HAP-1 (cell line): ENCODE measurements at regions of chr4 and their contacts with region 1.

Region 1: DNA sequence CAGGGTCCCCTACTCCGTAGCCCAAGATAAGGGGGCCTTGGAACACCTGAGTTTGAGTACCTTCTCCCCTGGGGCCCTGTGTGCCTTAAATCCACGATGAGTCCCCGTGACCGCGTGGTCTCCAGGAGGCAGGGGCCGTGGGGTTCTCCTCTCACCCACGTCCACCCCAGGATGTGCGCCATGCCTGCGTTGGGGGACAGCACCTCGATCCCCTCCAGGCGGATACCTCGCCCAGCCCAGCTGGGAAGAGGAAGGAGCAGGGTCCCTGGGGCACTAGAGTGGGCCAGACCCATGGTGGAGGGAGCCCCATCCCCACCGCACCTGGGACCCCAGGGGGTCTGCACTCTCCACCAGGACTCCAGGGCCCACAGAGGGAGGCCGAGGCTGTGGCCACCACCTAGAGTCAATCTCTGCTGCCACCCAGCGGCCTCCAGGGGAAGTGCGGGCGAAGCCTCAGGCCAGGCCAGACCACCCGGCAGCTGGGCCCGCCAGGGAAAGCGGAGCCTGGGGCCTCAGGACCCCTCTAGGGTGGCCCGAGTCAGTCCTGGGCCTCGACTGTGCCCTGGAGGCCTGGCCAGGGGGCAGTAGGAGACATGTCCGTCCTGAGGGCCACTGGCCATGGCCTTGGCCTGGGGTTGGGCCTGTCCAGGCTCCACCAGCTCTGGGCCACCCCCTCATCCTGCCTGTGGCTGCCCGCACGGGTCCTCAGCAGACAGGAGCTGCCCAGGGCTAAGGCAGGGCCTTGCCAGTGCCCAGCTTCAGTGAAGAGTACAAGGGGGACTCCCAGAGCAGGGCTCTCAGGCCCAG is 55.0 kb downstream of the FAM53A start:
- DNase-seq: peak; percentile 19 to 87
- H3K4me3 ChIP-seq: no peak overlapping the region
- H3K4me1 ChIP-seq: no peaks in the 10 kb centered on the region
- H3K27me3 ChIP-seq: peaks cover 6% of the 10 kb centered on the region; the same call in 1 of the 2 replicates

Region 2: DNA sequence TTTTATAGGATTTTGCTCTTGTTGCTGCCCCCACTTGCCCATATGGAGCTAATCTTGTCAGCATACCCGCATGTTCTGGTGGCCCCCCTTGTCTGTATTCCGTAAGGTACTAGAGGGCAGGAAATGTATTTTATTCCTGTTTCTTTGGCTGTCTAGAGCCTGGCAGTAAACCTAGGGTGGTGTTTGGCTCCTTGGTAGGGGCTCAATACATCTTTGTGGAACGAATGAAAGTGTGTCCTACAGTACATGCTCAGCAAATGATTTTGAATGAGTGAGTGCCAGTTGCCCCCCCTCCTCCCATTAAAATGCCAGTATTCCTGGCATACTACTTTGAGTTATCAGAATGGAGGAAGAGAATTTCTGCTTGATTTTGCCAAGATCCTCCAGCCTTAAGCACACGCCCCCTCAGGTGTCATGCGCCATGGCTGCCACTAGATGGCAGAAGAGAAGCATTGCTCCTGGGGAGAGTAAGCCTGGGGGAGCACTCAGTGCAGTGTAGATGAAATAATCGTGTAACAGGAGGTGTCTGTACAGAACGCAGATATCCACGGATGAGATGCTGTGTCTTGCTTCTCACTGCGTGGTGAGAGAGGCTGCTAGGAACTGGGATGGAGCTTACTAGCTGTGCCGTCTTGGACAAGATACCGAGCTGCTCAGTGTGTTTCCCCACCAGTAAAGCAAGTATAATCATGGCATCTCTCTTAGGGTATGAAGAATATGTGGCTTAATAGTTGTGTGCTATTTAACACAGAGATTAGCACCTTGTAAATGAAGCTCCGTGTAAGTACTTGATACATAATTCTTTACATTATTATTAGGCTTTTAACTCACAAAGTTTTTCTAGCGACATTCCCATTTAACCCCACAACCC is 498.5 kb before region 1 on chr4:
- in situ Hi-C with region 1: loop called (anchors 25 kb)
- DNase-seq: peak; percentile 48 to 72
- H3K4me3 ChIP-seq: no peak overlapping the region
- H3K4me1 ChIP-seq: no peaks in the 10 kb centered on the region
- H3K27me3 ChIP-seq: no peaks in the 10 kb centered on the region; the same call in none of the 2 replicates

Region 3: DNA sequence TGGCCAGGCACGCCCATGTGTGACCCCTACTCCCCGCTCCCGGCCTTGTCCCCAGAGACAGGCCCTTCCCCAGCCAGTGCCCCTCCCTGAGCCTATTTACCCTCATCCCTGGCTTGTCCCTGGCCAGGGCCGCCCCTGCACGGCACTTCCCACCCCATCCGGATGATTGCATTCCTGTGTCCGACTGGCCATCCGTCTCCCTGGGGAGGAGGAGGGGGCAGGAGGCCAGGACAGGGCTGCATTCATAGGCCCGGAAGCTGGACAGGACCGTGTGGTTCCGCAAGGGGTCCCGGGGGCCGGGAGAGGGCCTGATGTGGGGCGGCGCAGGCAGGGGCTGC is 403.0 kb before region 1 on chr4:
- in situ Hi-C with region 1: no loop called
- DNase-seq: no peak
- H3K4me3 ChIP-seq: no peak overlapping the region
- H3K4me1 ChIP-seq: no peaks in the 10 kb centered on the region
- H3K27me3 ChIP-seq: no peaks in the 10 kb centered on the region

Region 4: GRCh38 chr4:1351854-1352633 is 277.1 kb before region 1 on chr4:
- in situ Hi-C with region 1: loop called (anchors 25 kb)
- DNase-seq: peak; percentile 53 to 92
- H3K4me3 ChIP-seq: no peak overlapping the region
- H3K4me1 ChIP-seq: peaks cover 2% of the 10 kb centered on the region; the same call in 1 of the 2 replicates
- H3K27me3 ChIP-seq: no peaks in the 10 kb centered on the region